AG04449 (cell line): ENCODE measurements at regions of chr10 and their contacts with region 1.

Region 1: GRCh38 chr10:24503461-24504320 is 220.0 kb downstream of the ARHGAP21 start:
- DNase-seq: no peak
- H3K4me3 ChIP-seq: no peak overlapping the region
- CTCF ChIP-seq: peak; percentile 49

Region 2: DNA sequence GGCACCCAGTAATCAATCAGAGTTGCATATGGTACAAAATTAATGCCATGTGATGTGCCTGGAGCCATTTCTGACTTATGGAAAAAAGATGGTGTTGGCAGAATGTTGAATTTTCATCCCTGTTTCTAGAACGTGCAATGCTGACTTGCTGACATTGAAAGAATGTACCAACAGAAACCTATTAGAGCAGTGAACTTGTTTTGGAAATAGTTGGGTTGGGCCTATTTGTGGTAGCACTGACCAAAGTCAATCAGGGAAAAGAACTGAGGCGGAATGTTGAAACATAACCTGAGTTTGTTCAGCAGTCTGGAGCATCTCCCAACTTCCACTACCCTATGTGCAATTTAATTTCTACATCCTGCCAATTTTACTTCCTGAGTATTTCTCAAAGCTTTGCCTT is 306.4 kb before region 1 on chr10:
- CTCF ChIA-PET with region 1: interaction called, 12 read pairs
- POLR2A ChIA-PET with region 1: no interaction called
- DNase-seq: no peak
- H3K4me3 ChIP-seq: no peak overlapping the region
- CTCF ChIP-seq: no peak

Region 3: DNA sequence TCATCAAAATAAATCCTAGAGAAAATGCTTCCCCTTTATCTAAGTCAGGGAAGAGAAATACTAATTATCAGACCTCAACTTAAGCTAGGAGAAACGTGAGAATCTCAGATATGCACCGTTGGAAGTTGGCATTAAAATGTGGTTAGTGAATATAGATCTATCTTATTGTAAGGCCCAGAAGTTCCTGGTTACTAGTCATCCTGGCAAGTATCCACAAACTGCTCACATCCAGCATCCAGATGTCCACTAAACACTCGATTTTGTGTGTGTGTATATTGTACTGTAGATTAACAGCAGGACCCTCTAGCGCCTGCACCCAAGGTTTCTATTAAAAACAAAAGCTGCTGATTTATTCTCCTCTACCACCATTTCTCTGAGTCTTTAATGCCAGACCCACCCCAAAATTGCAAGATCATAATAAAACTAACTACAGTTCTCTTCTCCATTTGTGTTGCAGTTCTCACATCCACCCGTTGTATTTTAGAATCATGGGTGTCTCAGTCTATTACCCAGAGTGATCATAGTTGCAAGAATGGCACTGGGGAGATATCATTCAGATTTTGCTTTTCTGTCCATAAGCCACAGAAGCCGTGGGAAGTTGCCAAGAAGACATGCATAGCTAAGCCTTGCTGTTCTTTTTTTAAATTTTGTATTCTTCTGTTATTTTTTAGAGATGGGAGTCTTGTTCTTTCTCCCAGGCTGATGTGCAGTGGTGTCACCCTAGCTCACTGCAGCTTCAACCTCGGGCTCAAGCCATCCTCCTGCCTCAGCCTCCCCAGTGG is 129.4 kb before region 1 on chr10:
- CTCF ChIA-PET with region 1: interaction called, 15 read pairs
- POLR2A ChIA-PET with region 1: no interaction called
- DNase-seq: peak; percentile 71
- H3K4me3 ChIP-seq: no peak overlapping the region
- CTCF ChIP-seq: no peak

Region 4: DNA sequence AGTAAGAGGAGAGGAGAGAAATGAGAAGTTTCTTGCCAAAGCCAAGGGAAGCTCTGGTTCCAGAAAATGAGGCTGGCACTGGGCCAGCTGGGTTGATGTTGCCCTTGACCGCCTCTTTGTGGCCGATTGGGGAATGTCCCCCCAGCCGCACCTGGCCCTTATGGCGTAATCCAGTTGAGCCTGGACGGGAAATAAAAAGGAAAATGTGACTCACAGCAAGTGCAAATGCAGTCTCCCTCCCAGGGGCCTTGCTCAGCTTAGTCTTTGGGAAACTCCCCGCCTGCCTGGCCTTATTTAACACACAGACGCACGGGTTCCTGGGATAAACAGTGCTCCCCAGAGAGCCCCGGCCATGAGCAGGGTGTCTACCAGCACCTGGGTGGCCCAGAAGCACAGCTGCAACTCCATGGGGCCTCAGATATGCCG is 120.0 kb before region 1 on chr10:
- CTCF ChIA-PET with region 1: interaction called, 35 read pairs
- POLR2A ChIA-PET with region 1: no interaction called
- DNase-seq: peak; percentile 95
- H3K4me3 ChIP-seq: no peak overlapping the region
- CTCF ChIP-seq: peak; percentile 66